ENCODE measurements at regions of chr20 and their contacts with region 1.

Region 1: DNA sequence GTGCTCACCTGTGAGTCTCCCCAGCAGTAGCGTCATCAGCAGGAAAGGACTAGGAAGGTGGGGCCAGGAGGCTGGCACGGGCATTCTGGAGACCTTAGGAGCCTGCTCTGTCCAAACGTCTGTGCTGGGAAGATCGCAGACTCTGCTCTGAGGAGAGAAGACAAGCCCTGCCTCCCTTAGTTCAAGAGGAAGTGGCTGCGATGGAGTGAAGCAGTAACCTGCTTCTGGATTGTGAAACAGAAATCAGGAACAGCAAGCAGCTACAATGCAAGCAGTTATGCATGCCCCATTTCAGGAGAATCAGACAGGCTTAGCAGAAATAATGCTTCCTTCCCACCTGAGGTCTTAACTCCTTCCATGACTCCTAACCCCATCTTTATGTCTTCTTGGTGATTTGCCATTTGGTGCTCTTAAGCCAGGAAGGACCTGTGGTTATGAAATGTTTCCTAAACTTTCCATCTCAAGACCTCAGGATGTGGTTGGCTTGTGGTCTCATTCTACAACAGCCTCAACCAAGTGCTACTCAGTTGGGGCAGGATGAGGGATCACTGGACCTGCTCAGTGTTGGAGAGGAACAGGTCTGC is at the start of gene SIRPB1:
- DNase-seq: peak; percentile 30
- H3K4me3 Mint-ChIP-seq: no peak within 1 kb of the TSS
- H3K27ac Mint-ChIP-seq: no peak within 1 kb of the TSS
- H3K4me1 Mint-ChIP-seq: peaks cover 53% of the 10 kb centered on the region
- H3K27me3 Mint-ChIP-seq: no peaks in the 10 kb centered on the region
- total RNA-seq, gene SIRPB1: 1.3 to 2.0 TPM

Region 2: GRCh38 chr20:1588533-1589460 is 31.2 kb before region 1 on chr20:
- CTCF ChIA-PET with region 1: no interaction called
- POLR2A ChIA-PET with region 1: no interaction called
- intact Hi-C with region 1: loop called (anchors 2 kb)
- DNase-seq: peak; percentile 44
- H3K4me3 Mint-ChIP-seq: no peak overlapping the region
- H3K27ac Mint-ChIP-seq: peak overlapping the region; percentile 88
- H3K4me1 Mint-ChIP-seq: peaks cover 26% of the 10 kb centered on the region
- H3K27me3 Mint-ChIP-seq: no peaks in the 10 kb centered on the region

Region 3: GRCh38 chr20:1631309-1632151 is 11.6 kb after region 1 on chr20:
- CTCF ChIA-PET with region 1: no interaction called
- POLR2A ChIA-PET with region 1: no interaction called
- intact Hi-C with region 1: loop called (anchors 1 kb)
- DNase-seq: no peak
- H3K4me3 Mint-ChIP-seq: peak overlapping the region; percentile 0
- H3K27ac Mint-ChIP-seq: peak overlapping the region; percentile 55
- H3K4me1 Mint-ChIP-seq: peaks cover 63% of the 10 kb centered on the region
- H3K27me3 Mint-ChIP-seq: no peaks in the 10 kb centered on the region